ENCODE measurements at regions of chr2 and their contacts with region 1.

Region 1: GRCh38 chr2:229884775-229885699 is 36.8 kb downstream of the TRIP12 start:
- DNase-seq: no peak
- ATAC-seq: no peak
- H3K4me3 ChIP-seq: no peak overlapping the region
- H3K4me3 Mint-ChIP-seq: no peak overlapping the region
- H3K27ac ChIP-seq: no peak overlapping the region
- H3K27ac Mint-ChIP-seq: peak overlapping the region in 1 of 2 donors; percentile 55
- H3K4me1 ChIP-seq: no peaks in the 10 kb centered on the region
- H3K4me1 Mint-ChIP-seq: peaks cover 50 to 70% (median 64%) of the 10 kb centered on the region in 3 donors
- H3K27me3 ChIP-seq: no peaks in the 10 kb centered on the region
- H3K27me3 Mint-ChIP-seq: no peaks in the 10 kb centered on the region

Region 2: DNA sequence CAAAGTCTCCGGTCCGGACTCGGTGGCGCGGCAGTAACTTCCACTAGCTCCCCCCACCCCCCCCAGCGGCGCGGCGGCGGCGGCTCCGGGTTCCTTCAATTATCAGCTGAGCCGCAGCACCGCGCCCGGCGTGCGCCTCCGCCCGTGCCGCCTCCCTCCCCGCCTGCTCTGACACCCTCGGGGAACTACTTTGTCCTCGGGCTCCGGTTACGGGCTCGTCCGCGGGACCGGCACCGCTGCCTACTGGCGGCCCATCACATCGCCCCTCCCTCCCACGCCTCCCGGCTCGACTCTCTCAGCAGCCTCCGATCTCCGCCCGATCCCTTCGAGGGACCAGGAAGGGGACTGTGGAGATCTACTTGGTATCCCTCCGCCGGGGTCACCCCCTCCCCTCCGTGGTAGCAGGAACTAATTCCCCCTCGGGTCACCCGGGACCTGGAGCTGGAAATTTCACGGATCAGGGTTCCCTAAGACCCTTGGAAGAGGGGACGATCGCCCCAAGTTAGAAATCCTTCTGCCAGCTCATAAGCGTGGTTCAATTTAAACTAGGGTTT is 36.9 kb after region 1 on chr2 and contains the start of gene TRIP12:
- CTCF ChIA-PET with region 1: no interaction called
- POLR2A ChIA-PET with region 1: interaction called in 1 of 2 experiments, 13 read pairs
- DNase-seq: peak; percentile 75 to 96 (median 85)
- ATAC-seq: peak; percentile 74 to 80 (median 78)
- H3K4me3 ChIP-seq: peak within 1 kb of the TSS; percentile 93 to 99
- H3K4me3 Mint-ChIP-seq: peak within 1 kb of the TSS; percentile 97 to 99 (median 98)
- H3K27ac ChIP-seq: peak within 1 kb of the TSS; percentile 91
- H3K27ac Mint-ChIP-seq: peak within 1 kb of the TSS; percentile 99 to 100
- H3K4me1 ChIP-seq: peaks cover 16 to 22% of the 10 kb centered on the region in 2 experiments
- H3K4me1 Mint-ChIP-seq: peaks cover 48 to 55% (median 50%) of the 10 kb centered on the region in 3 donors
- H3K27me3 ChIP-seq: no peaks in the 10 kb centered on the region
- H3K27me3 Mint-ChIP-seq: no peaks in the 10 kb centered on the region
- total RNA-seq, gene TRIP12: 185 to 219 (median 192) TPM

Measured in T-cell (primary cell).